ENCODE measurements at regions of chr10 and their contacts with region 1.

Region 1: DNA sequence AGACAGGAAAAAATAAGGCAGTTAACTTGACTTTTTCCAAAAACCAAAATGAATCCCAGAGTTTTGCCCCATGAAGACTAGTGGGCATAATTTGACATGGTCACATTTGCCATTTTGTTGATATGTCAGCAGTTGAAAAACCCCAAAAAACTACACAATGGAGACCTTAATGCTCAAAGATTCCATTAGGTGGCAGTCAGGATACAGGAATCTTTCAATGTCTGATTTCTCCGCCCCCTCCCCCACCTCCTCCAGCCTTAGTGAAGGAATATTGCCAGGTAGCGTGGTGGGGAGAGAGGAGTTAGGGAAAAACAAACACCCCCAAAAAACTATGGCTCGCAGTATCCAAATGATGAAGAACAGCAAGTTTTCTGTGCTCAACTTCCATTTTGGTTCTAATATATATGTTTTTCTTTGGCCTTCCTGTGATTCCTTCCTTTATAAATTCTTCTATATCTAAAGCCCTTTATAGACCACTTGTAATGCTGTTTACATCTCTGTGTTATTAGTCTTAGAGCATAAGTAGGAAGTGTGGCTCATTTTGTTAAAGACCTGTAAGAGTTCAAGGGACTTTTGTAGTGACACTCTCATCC is 6.7 kb upstream of the SMNDC1 start:
- DNase-seq: no peak
- ATAC-seq: peak; percentile 83
- H3K4me3 Mint-ChIP-seq: no peak overlapping the region
- H3K27ac Mint-ChIP-seq: peak overlapping the region; percentile 13
- H3K4me1 Mint-ChIP-seq: peaks cover 19% of the 10 kb centered on the region
- H3K27me3 Mint-ChIP-seq: no peaks in the 10 kb centered on the region
- CTCF ChIP-seq: no peak

Region 2: GRCh38 chr10:110260746-110261477 is 50.5 kb before region 1 on chr10:
- CTCF ChIA-PET with region 1: no interaction called
- POLR2A ChIA-PET with region 1: no interaction called
- intact Hi-C with region 1: no loop called
- DNase-seq: no peak
- ATAC-seq: no peak
- H3K4me3 Mint-ChIP-seq: no peak overlapping the region
- H3K27ac Mint-ChIP-seq: no peak overlapping the region
- H3K4me1 Mint-ChIP-seq: no peaks in the 10 kb centered on the region
- H3K27me3 Mint-ChIP-seq: no peaks in the 10 kb centered on the region
- CTCF ChIP-seq: no peak

Region 3: DNA sequence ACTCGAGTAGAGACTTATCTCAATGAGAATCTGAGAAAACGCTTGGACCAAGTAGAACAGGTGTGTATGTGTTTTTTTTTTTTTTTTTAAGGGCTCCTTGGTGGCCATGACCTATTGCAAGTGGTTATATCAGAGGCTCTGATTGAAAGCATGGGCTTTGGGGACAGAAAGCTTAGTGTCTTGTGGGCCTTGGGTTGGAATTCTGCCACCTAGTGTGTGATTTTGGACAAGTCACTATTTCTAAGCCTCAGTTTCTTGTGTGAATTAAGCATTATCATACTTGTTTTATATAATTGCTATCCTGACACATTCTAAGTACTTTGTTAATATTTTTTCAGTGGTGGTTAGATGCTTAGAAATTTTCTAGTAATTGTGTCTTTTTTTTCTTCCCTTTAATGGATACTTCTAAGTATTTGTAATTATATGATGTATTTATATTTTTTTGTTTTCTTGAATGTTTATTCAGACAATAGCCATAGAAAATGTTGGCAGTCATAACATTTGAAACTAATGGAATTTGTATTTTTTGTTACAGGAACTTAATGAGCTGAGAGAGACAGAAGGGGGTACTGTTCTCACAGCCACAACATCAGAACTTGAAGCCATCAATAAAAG is 289.1 kb after region 1 on chr10:
- CTCF ChIA-PET with region 1: interaction called, 80 read pairs
- POLR2A ChIA-PET with region 1: interaction called, 14 read pairs
- intact Hi-C with region 1: loop called (anchors 1 kb)
- DNase-seq: no peak
- ATAC-seq: peak; percentile 67
- H3K4me3 Mint-ChIP-seq: no peak overlapping the region
- H3K27ac Mint-ChIP-seq: no peak overlapping the region
- H3K4me1 Mint-ChIP-seq: no peaks in the 10 kb centered on the region
- H3K27me3 Mint-ChIP-seq: no peaks in the 10 kb centered on the region
- CTCF ChIP-seq: no peak